Naive thymus-derived CD4-positive, alpha-beta T cell (primary cell): ENCODE measurements at regions of chr7 and their contacts with region 1.

Region 1: GRCh38 chr7:148962823-148963582 is 65.3 kb downstream of the PDIA4 start:
- DNase-seq: peak in 8 of 9 donors; percentile 45 to 80 (median 72)
- ATAC-seq: peak; percentile 61
- H3K4me3 ChIP-seq: peak overlapping the region; percentile 72
- H3K4me3 Mint-ChIP-seq: peak overlapping the region; percentile 78 to 98 (median 93)
- H3K27ac ChIP-seq: peak overlapping the region; percentile 66
- H3K27ac Mint-ChIP-seq: peak overlapping the region; percentile 86 to 95 (median 93)
- H3K4me1 ChIP-seq: peaks cover 0 to 7% of the 10 kb centered on the region in 2 donors
- H3K4me1 Mint-ChIP-seq: peaks cover 11 to 33% (median 25%) of the 10 kb centered on the region in 7 donors
- H3K27me3 ChIP-seq: no peaks in the 10 kb centered on the region
- H3K27me3 Mint-ChIP-seq: peaks cover 0 to 3% (median 0%) of the 10 kb centered on the region in 5 donors

Region 2: GRCh38 chr7:148503875-148504487 is 459.0 kb before region 1 on chr7:
- CTCF ChIA-PET with region 1: interaction called, 7 read pairs
- POLR2A ChIA-PET with region 1: no interaction called
- intact Hi-C with region 1: loop called (anchors 1 kb)
- DNase-seq: peak in 7 of 9 donors; percentile 18 to 52 (median 40)
- ATAC-seq: no peak
- H3K4me3 ChIP-seq: no peak overlapping the region
- H3K4me3 Mint-ChIP-seq: no peak overlapping the region
- H3K27ac ChIP-seq: no peak overlapping the region
- H3K27ac Mint-ChIP-seq: no peak overlapping the region
- H3K4me1 ChIP-seq: no peaks in the 10 kb centered on the region
- H3K4me1 Mint-ChIP-seq: peaks cover 0 to 7% (median 0%) of the 10 kb centered on the region in 7 donors
- H3K27me3 ChIP-seq: no peaks in the 10 kb centered on the region
- H3K27me3 Mint-ChIP-seq: peaks cover 0 to 27% (median 16%) of the 10 kb centered on the region in 5 donors

Region 3: DNA sequence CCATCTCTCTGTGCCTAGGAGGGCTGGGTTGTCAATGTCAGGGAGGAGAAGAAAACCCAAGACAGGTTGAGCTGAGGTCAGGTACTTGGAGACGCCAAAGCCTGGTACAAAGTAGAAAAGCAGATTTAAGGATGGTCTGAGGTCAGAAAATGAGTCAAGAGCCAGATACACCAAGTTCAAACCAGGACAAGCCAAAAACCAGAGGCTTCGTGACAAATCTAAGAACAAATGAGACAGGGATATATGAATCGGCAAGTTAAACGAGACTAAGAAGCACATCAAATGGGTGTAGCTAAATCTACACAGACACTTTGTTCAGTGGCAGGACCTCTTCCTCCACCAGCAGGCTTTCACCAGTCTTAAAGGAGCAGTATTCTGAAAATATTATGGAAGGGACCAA is 338.3 kb before region 1 on chr7:
- CTCF ChIA-PET with region 1: interaction called, 3 read pairs
- POLR2A ChIA-PET with region 1: no interaction called
- intact Hi-C with region 1: loop called in 1 of 2 experiments (anchors 5 kb)
- DNase-seq: no peak
- ATAC-seq: no peak
- H3K4me3 ChIP-seq: no peak overlapping the region
- H3K4me3 Mint-ChIP-seq: peak overlapping the region in 6 of 10 donors; percentile 27 to 73 (median 62)
- H3K27ac ChIP-seq: no peak overlapping the region
- H3K27ac Mint-ChIP-seq: peak overlapping the region in 1 of 9 donors; percentile 5
- H3K4me1 ChIP-seq: peaks cover 16 to 30% of the 10 kb centered on the region in 2 donors
- H3K4me1 Mint-ChIP-seq: peaks cover 35 to 70% (median 60%) of the 10 kb centered on the region in 7 donors
- H3K27me3 ChIP-seq: no peaks in the 10 kb centered on the region
- H3K27me3 Mint-ChIP-seq: peaks cover 0 to 20% (median 6%) of the 10 kb centered on the region in 5 donors

Region 4: GRCh38 chr7:148800677-148801076 is 162.3 kb before region 1 on chr7:
- CTCF ChIA-PET with region 1: no interaction called
- POLR2A ChIA-PET with region 1: no interaction called
- intact Hi-C with region 1: loop called in 1 of 2 experiments (anchors 1 kb)
- DNase-seq: no peak
- ATAC-seq: no peak
- H3K4me3 ChIP-seq: no peak overlapping the region
- H3K4me3 Mint-ChIP-seq: no peak overlapping the region
- H3K27ac ChIP-seq: no peak overlapping the region
- H3K27ac Mint-ChIP-seq: no peak overlapping the region
- H3K4me1 ChIP-seq: no peaks in the 10 kb centered on the region
- H3K4me1 Mint-ChIP-seq: no peaks in the 10 kb centered on the region
- H3K27me3 ChIP-seq: no peaks in the 10 kb centered on the region
- H3K27me3 Mint-ChIP-seq: no peaks in the 10 kb centered on the region

Region 5: DNA sequence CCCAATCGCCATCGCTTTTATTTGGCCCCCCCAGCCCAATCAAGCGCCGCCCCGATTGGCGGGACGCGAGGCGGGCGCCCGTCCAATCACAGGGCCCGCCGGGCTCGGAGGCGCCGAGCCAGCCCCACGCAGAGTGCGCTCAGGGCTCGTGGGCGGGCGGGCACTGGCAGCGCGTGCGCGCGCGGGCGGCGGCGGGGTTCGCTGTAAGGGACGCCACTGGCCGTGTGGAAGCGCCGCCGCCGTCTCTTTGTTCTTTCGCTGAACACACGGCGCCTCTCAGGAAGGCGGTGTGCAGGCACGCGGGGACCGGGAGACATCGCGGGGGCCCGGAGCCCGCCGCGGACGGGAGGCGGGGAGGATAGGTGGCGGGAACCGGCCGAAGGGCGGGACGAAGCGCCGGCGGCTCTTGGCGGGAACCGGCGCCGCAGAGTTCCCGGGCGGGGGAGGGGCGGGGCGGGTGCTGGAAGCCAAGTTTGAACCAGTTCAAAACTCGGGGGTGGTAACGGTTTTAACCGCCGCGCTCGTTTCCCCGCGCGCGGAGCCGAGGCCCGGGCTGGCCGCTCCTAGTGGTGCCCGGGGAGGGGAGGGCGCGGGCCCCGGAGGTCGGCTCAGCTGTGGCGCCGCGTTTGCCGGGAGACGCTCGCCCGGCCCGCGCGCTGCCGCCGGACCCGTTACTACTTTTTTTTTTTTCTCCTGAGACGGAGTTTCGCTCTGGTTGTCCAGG is 78.5 kb before region 1 on chr7:
- CTCF ChIA-PET with region 1: no interaction called
- POLR2A ChIA-PET with region 1: interaction called, 3 read pairs
- intact Hi-C with region 1: loop called (anchors 1 kb)
- DNase-seq: peak; percentile 89 to 96 (median 94)
- ATAC-seq: peak; percentile 94
- H3K4me3 ChIP-seq: peak overlapping the region; percentile 57
- H3K4me3 Mint-ChIP-seq: peak overlapping the region; percentile 85 to 98 (median 94)
- H3K27ac ChIP-seq: peak overlapping the region; percentile 97
- H3K27ac Mint-ChIP-seq: peak overlapping the region; percentile 89 to 98 (median 93)
- H3K4me1 ChIP-seq: peaks cover 6 to 7% of the 10 kb centered on the region in 2 donors
- H3K4me1 Mint-ChIP-seq: peaks cover 0 to 45% (median 29%) of the 10 kb centered on the region in 7 donors
- H3K27me3 ChIP-seq: no peaks in the 10 kb centered on the region
- H3K27me3 Mint-ChIP-seq: no peaks in the 10 kb centered on the region

Region 6: DNA sequence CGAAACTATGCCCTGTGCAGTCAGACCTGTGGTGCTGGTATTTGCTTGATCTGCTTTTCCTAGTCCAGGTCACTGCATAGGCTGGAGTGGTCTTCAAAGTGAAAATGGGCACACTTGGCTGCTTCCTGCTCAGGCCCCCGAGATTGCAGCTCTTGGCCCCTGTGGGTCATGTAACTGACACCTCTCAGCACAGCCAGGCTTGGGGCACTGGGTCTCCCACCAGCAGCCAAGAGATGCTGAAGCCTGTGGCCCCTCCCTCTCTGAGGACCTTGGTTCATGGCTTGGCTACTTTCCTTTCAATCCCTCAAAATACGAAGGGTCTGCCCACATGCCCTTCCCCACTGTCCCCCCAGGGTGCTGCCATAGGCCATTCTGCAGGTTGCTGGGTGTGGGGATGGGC is 31.6 kb after region 1 on chr7:
- CTCF ChIA-PET with region 1: no interaction called
- POLR2A ChIA-PET with region 1: no interaction called
- intact Hi-C with region 1: no loop called
- DNase-seq: no peak
- ATAC-seq: no peak
- H3K4me3 ChIP-seq: no peak overlapping the region
- H3K4me3 Mint-ChIP-seq: no peak overlapping the region
- H3K27ac ChIP-seq: no peak overlapping the region
- H3K27ac Mint-ChIP-seq: no peak overlapping the region
- H3K4me1 ChIP-seq: no peaks in the 10 kb centered on the region
- H3K4me1 Mint-ChIP-seq: no peaks in the 10 kb centered on the region
- H3K27me3 ChIP-seq: no peaks in the 10 kb centered on the region
- H3K27me3 Mint-ChIP-seq: no peaks in the 10 kb centered on the region

Region 7: GRCh38 chr7:149090397-149091195 is 127.6 kb after region 1 on chr7 and contains the start of gene ZNF786:
- CTCF ChIA-PET with region 1: no interaction called
- POLR2A ChIA-PET with region 1: no interaction called
- intact Hi-C with region 1: loop called in 1 of 2 experiments (anchors 1 kb)
- DNase-seq: peak; percentile 87 to 97 (median 92)
- ATAC-seq: peak; percentile 95
- H3K4me3 ChIP-seq: peak within 1 kb of the TSS; percentile 93
- H3K4me3 Mint-ChIP-seq: peak within 1 kb of the TSS; percentile 91 to 100 (median 99)
- H3K27ac ChIP-seq: peak within 1 kb of the TSS; percentile 85
- H3K27ac Mint-ChIP-seq: peak within 1 kb of the TSS; percentile 93 to 100 (median 99)
- H3K4me1 ChIP-seq: peaks cover 8 to 9% of the 10 kb centered on the region in 2 donors
- H3K4me1 Mint-ChIP-seq: peaks cover 18 to 40% (median 35%) of the 10 kb centered on the region in 7 donors
- H3K27me3 ChIP-seq: no peaks in the 10 kb centered on the region
- H3K27me3 Mint-ChIP-seq: no peaks in the 10 kb centered on the region
- total RNA-seq, gene ZNF786: 5.4 to 22.0 (median 10.0) TPM